ENCODE measurements at regions of chr14 and their contacts with region 1.

Region 1: DNA sequence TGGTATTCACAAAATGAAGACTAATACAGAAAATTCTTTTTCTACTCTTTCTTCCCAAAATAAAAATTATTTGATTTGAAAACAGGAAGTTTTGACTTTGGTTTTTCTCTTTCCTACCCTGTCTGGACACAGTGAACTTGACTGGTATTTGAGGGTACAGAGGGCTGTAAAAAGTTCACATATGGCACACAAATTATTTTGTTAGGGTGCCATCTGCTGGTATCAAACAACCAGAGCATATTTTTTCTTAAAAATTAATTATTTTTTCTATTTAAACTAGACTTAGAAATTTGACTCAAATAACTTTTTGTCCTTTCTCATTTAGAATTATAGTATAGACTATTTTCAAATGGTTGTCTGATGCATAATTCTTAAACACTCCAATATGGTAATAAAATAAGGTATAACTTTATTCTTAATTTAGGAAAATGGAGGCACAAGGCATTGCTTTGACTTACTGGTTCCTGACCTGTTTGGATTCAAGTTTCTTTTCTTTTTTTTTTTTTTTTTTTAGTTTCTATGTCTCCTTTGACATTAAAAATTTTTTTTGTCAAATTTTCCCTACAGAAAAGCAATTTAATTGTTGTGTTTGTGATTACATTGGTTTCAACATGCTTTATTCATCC is 390.6 kb downstream of the PRKD1 start:
- ATAC-seq: no peak
- H3K4me3 ChIP-seq: no peak overlapping the region
- H3K27ac ChIP-seq: no peak overlapping the region
- H3K4me1 ChIP-seq: no peaks in the 10 kb centered on the region

Region 2: GRCh38 chr14:28773861-28774691 is 762.9 kb before region 1 on chr14:
- in situ Hi-C with region 1: loop called in 5 of 9 experiments (anchors 10 to 25 kb)
- ATAC-seq: peak; percentile 81 to 100 (median 99)
- H3K4me3 ChIP-seq: peak overlapping the region in 3 of 5 donors; percentile 6 to 16 (median 7)
- H3K27ac ChIP-seq: no peak overlapping the region
- H3K4me1 ChIP-seq: no peaks in the 10 kb centered on the region